Naive thymus-derived CD4-positive, alpha-beta T cell (primary cell): ENCODE measurements at regions of chr11 and their contacts with region 1.

Region 1: GRCh38 chr11:10307442-10308207 is 2.8 kb downstream of the ADM start:
- DNase-seq: peak; percentile 73 to 88 (median 83)
- ATAC-seq: peak; percentile 83
- H3K4me3 ChIP-seq: peak overlapping the region; percentile 99
- H3K4me3 Mint-ChIP-seq: peak overlapping the region; percentile 64 to 100 (median 95)
- H3K27ac ChIP-seq: no peak overlapping the region
- H3K27ac Mint-ChIP-seq: peak overlapping the region in 6 of 9 donors; percentile 15 to 85 (median 46)
- H3K4me1 ChIP-seq: peaks cover 15 to 37% of the 10 kb centered on the region in 2 donors
- H3K4me1 Mint-ChIP-seq: peaks cover 25 to 57% (median 38%) of the 10 kb centered on the region in 7 donors
- H3K27me3 ChIP-seq: peaks cover 3 to 14% of the 10 kb centered on the region in 2 donors
- H3K27me3 Mint-ChIP-seq: peaks cover 31 to 54% (median 44%) of the 10 kb centered on the region in 5 donors

Region 2: GRCh38 chr11:9384535-9385303 is 922.9 kb before region 1 on chr11 and contains the start of gene IPO7:
- CTCF ChIA-PET with region 1: no interaction called
- POLR2A ChIA-PET with region 1: no interaction called
- intact Hi-C with region 1: loop called in 1 of 2 experiments (anchors 10 kb)
- DNase-seq: peak; percentile 68 to 88 (median 84)
- ATAC-seq: peak; percentile 99
- H3K4me3 ChIP-seq: peak within 1 kb of the TSS; percentile 78
- H3K4me3 Mint-ChIP-seq: peak within 1 kb of the TSS; percentile 89 to 98 (median 94)
- H3K27ac ChIP-seq: peak within 1 kb of the TSS; percentile 88
- H3K27ac Mint-ChIP-seq: peak within 1 kb of the TSS; percentile 79 to 94 (median 91)
- H3K4me1 ChIP-seq: peaks cover 11 to 15% of the 10 kb centered on the region in 2 donors
- H3K4me1 Mint-ChIP-seq: peaks cover 25 to 51% (median 38%) of the 10 kb centered on the region in 7 donors
- H3K27me3 ChIP-seq: no peaks in the 10 kb centered on the region
- H3K27me3 Mint-ChIP-seq: no peaks in the 10 kb centered on the region
- total RNA-seq, gene IPO7: 47.3 to 105 (median 61.3) TPM

Region 3: GRCh38 chr11:9757809-9758636 is 549.6 kb before region 1 on chr11:
- CTCF ChIA-PET with region 1: interaction called, 36 read pairs
- POLR2A ChIA-PET with region 1: no interaction called
- intact Hi-C with region 1: loop called (anchors 1 kb)
- DNase-seq: peak; percentile 79 to 97 (median 90)
- ATAC-seq: peak; percentile 94
- H3K4me3 ChIP-seq: peak overlapping the region; percentile 91
- H3K4me3 Mint-ChIP-seq: peak overlapping the region; percentile 77 to 86 (median 84)
- H3K27ac ChIP-seq: peak overlapping the region; percentile 73
- H3K27ac Mint-ChIP-seq: peak overlapping the region; percentile 34 to 91 (median 81)
- H3K4me1 ChIP-seq: peaks cover 7 to 9% of the 10 kb centered on the region in 2 donors
- H3K4me1 Mint-ChIP-seq: peaks cover 12 to 39% (median 18%) of the 10 kb centered on the region in 7 donors
- H3K27me3 ChIP-seq: no peaks in the 10 kb centered on the region
- H3K27me3 Mint-ChIP-seq: no peaks in the 10 kb centered on the region

Region 4: GRCh38 chr11:10293423-10294289 is 14.0 kb before region 1 on chr11 and contains the start of gene SBF2:
- CTCF ChIA-PET with region 1: interaction called, 10 read pairs
- POLR2A ChIA-PET with region 1: interaction called, 6 read pairs
- intact Hi-C with region 1: loop called (anchors 1 kb)
- DNase-seq: peak; percentile 62 to 83 (median 77)
- ATAC-seq: peak; percentile 71
- H3K4me3 ChIP-seq: peak within 1 kb of the TSS; percentile 73
- H3K4me3 Mint-ChIP-seq: peak within 1 kb of the TSS; percentile 82 to 92 (median 88)
- H3K27ac ChIP-seq: peak within 1 kb of the TSS; percentile 48
- H3K27ac Mint-ChIP-seq: peak within 1 kb of the TSS in 8 of 9 donors; percentile 10 to 83 (median 59)
- H3K4me1 ChIP-seq: peaks cover 16 to 29% of the 10 kb centered on the region in 2 donors
- H3K4me1 Mint-ChIP-seq: peaks cover 28 to 44% (median 37%) of the 10 kb centered on the region in 7 donors
- H3K27me3 ChIP-seq: peaks cover 0 to 2% of the 10 kb centered on the region in 2 donors
- H3K27me3 Mint-ChIP-seq: peaks cover 15 to 55% (median 26%) of the 10 kb centered on the region in 5 donors
- total RNA-seq, gene SBF2: 8.5 to 35.2 (median 16.1) TPM

Region 5: DNA sequence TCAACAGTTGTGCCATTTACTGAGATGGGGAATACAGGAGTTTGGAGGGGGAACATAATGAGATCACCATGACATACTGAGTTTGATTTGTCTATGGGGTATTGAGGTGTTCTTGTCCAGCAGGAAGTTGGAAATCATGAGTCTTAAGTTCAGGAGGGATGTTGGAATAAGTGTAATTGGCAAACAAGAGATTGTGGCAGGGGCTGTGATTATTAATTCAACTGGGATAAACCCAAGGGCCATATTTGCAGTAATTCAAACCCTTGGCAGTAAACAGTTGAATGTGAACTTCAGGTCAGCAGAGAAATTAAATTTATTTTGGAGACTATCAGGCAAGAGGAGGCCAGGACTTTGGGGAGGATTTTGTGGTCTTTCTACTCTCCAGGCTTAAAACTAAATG is 30.7 kb after region 1 on chr11:
- CTCF ChIA-PET with region 1: no interaction called
- POLR2A ChIA-PET with region 1: no interaction called
- intact Hi-C with region 1: no loop called
- DNase-seq: no peak
- ATAC-seq: no peak
- H3K4me3 ChIP-seq: no peak overlapping the region
- H3K4me3 Mint-ChIP-seq: no peak overlapping the region
- H3K27ac ChIP-seq: no peak overlapping the region
- H3K27ac Mint-ChIP-seq: no peak overlapping the region
- H3K4me1 ChIP-seq: no peaks in the 10 kb centered on the region
- H3K4me1 Mint-ChIP-seq: no peaks in the 10 kb centered on the region
- H3K27me3 ChIP-seq: no peaks in the 10 kb centered on the region
- H3K27me3 Mint-ChIP-seq: peaks cover 10 to 27% (median 23%) of the 10 kb centered on the region in 5 donors

Region 6: DNA sequence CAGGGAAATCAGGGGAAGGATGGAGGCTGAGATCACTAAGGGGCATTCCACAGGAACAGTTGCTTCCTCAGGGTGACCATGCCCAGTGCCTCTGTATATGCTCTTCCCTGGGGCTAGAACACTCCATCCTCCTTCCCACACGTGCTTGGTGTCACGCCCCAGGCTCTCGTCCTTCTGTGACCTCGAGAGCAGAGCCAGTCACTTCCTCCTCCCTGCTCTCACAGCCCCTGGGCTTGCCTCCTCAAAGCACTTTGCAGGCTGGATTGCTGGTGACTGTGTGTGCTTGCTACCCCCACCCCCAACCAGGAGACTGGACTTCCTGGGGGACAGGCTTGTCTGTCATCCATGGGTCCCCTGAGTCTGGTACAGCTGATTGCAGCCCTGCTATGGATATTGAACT is 90.9 kb after region 1 on chr11:
- CTCF ChIA-PET with region 1: no interaction called
- POLR2A ChIA-PET with region 1: no interaction called
- intact Hi-C with region 1: no loop called
- DNase-seq: no peak
- ATAC-seq: peak; percentile 72
- H3K4me3 ChIP-seq: no peak overlapping the region
- H3K4me3 Mint-ChIP-seq: no peak overlapping the region
- H3K27ac ChIP-seq: no peak overlapping the region
- H3K27ac Mint-ChIP-seq: no peak overlapping the region
- H3K4me1 ChIP-seq: no peaks in the 10 kb centered on the region
- H3K4me1 Mint-ChIP-seq: peaks cover 0 to 16% (median 5%) of the 10 kb centered on the region in 7 donors
- H3K27me3 ChIP-seq: no peaks in the 10 kb centered on the region
- H3K27me3 Mint-ChIP-seq: peaks cover 0 to 6% (median 5%) of the 10 kb centered on the region in 5 donors

Region 7: GRCh38 chr11:10540923-10541560 is 233.4 kb after region 1 on chr11 and contains the start of gene RNF141:
- CTCF ChIA-PET with region 1: no interaction called
- POLR2A ChIA-PET with region 1: no interaction called
- intact Hi-C with region 1: loop called in 1 of 2 experiments (anchors 5 kb)
- DNase-seq: peak; percentile 87 to 99 (median 94)
- ATAC-seq: peak; percentile 99
- H3K4me3 ChIP-seq: peak within 1 kb of the TSS; percentile 81
- H3K4me3 Mint-ChIP-seq: peak within 1 kb of the TSS; percentile 86 to 93 (median 90)
- H3K27ac ChIP-seq: peak within 1 kb of the TSS; percentile 90
- H3K27ac Mint-ChIP-seq: peak within 1 kb of the TSS; percentile 68 to 95 (median 86)
- H3K4me1 ChIP-seq: peaks cover 0 to 8% of the 10 kb centered on the region in 2 donors
- H3K4me1 Mint-ChIP-seq: peaks cover 9 to 37% (median 27%) of the 10 kb centered on the region in 7 donors
- H3K27me3 ChIP-seq: no peaks in the 10 kb centered on the region
- H3K27me3 Mint-ChIP-seq: no peaks in the 10 kb centered on the region
- total RNA-seq, gene RNF141: 11.9 to 22.7 (median 17.3) TPM

Region 8: DNA sequence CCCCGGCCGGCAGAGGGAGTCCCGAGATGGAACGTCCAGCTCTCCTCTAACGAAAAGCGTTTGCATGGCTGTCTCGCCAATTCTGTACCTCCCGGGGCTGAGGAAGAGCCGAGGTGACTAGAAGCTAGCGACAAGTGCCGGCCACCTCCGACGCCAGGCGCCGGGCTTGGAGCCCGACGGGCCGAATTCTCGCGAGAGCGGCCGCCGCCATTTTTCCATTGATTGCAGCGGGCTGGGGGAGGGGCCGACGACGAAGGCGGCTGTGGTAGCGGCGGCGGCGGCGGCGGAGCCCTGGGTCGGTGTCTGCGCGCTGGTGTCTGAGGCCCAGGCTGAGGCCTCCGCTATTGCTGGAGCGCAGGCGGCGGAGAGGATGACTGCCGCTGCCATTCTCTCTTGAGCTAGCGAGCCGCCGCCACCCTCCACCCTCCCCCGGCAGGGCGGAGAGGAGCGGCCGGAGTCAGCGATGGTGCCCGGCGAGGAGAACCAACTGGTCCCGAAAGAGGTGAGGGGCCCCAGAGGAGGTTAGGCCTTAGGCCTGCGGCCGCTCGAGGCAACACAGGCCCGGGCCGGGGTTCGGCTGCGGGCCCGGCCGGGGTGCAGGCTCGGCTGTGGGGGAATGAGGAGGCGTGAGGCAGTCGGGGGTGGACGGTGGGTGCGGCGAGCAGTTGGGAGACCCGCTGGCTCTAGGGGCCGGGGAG is 1534.2 kb after region 1 on chr11 and contains the start of gene USP47:
- CTCF ChIA-PET with region 1: no interaction called
- POLR2A ChIA-PET with region 1: no interaction called
- intact Hi-C with region 1: loop called in 1 of 2 experiments (anchors 5 kb)
- DNase-seq: peak; percentile 90 to 98 (median 95)
- ATAC-seq: peak; percentile 90
- H3K4me3 ChIP-seq: peak within 1 kb of the TSS; percentile 76
- H3K4me3 Mint-ChIP-seq: peak within 1 kb of the TSS in 1 of 10 donors; percentile 59
- H3K27ac ChIP-seq: peak within 1 kb of the TSS; percentile 100
- H3K27ac Mint-ChIP-seq: peak within 1 kb of the TSS in 1 of 9 donors; percentile 64
- H3K4me1 ChIP-seq: peaks cover 27 to 36% of the 10 kb centered on the region in 2 donors
- H3K4me1 Mint-ChIP-seq: peaks cover 0 to 25% (median 3%) of the 10 kb centered on the region in 7 donors
- H3K27me3 ChIP-seq: no peaks in the 10 kb centered on the region
- H3K27me3 Mint-ChIP-seq: peaks cover 0 to 17% (median 13%) of the 10 kb centered on the region in 5 donors
- total RNA-seq, gene USP47: 45.6 to 71.8 (median 59.1) TPM